ENCODE measurements at regions of chr13 and their contacts with region 1.

Region 1: GRCh38 chr13:95403828-95404522 is 102.7 kb upstream of the ABCC4 start:
- DNase-seq: peak; percentile 55
- H3K4me3 ChIP-seq: peak overlapping the region in 2 of 3 experiments; percentile 12 to 41
- H3K27ac ChIP-seq: no peak overlapping the region
- H3K4me1 ChIP-seq: peaks cover 4% of the 10 kb centered on the region
- H3K27me3 ChIP-seq: no peaks in the 10 kb centered on the region
- CTCF ChIP-seq: peak; percentile 90 to 93

Region 2: GRCh38 chr13:94620286-94620896 is 783.6 kb before region 1 on chr13:
- CTCF ChIA-PET with region 1: no interaction called
- dilution Hi-C with region 1: no loop called
- in situ Hi-C with region 1: no loop called
- intact Hi-C with region 1: loop called (anchors 1 kb)
- DNase-seq: peak; percentile 28
- H3K4me3 ChIP-seq: no peak overlapping the region
- H3K27ac ChIP-seq: no peak overlapping the region
- H3K4me1 ChIP-seq: no peaks in the 10 kb centered on the region
- H3K27me3 ChIP-seq: no peaks in the 10 kb centered on the region
- CTCF ChIP-seq: peak; percentile 83 to 89

Region 3: GRCh38 chr13:95191821-95192563 is 212.0 kb before region 1 on chr13:
- CTCF ChIA-PET with region 1: interaction called, 20 read pairs
- dilution Hi-C with region 1: no loop called
- in situ Hi-C with region 1: loop called in 1 of 2 experiments (anchors 5 kb)
- intact Hi-C with region 1: loop called (anchors 1 kb)
- DNase-seq: peak; percentile 31
- H3K4me3 ChIP-seq: no peak overlapping the region
- H3K27ac ChIP-seq: no peak overlapping the region
- H3K4me1 ChIP-seq: no peaks in the 10 kb centered on the region
- H3K27me3 ChIP-seq: no peaks in the 10 kb centered on the region
- CTCF ChIP-seq: peak; percentile 82 to 91

Region 4: GRCh38 chr13:95378603-95379002 is 25.4 kb before region 1 on chr13:
- CTCF ChIA-PET with region 1: interaction called, 5 read pairs
- dilution Hi-C with region 1: no loop called
- in situ Hi-C with region 1: no loop called
- intact Hi-C with region 1: loop called (anchors 1 kb)
- DNase-seq: no peak
- H3K4me3 ChIP-seq: no peak overlapping the region
- H3K27ac ChIP-seq: no peak overlapping the region
- H3K4me1 ChIP-seq: peaks cover 2% of the 10 kb centered on the region
- H3K27me3 ChIP-seq: no peaks in the 10 kb centered on the region
- CTCF ChIP-seq: no peak

Region 5: DNA sequence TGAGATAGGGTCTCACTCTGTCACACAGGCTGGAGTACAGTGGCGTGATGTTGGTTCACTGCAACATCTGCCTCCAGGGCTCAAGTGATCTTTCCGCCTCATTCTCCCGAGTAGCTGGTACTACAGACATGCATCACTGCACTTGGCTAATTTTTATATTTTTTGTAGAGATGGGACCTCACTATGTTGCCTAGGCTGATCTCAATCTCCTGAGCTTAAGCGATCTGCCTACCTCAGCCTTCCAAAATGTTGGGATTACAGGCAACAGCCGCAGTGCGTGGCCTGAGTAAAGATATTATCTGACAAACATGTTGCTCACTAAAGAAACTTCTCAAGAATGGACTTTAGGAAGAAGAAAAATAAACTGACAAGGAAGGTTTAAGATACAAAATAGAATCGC is 22.7 kb after region 1 on chr13:
- CTCF ChIA-PET with region 1: no interaction called
- dilution Hi-C with region 1: no loop called
- in situ Hi-C with region 1: no loop called
- intact Hi-C with region 1: no loop called
- DNase-seq: no peak
- H3K4me3 ChIP-seq: no peak overlapping the region
- H3K27ac ChIP-seq: no peak overlapping the region
- H3K4me1 ChIP-seq: no peaks in the 10 kb centered on the region
- H3K27me3 ChIP-seq: no peaks in the 10 kb centered on the region
- CTCF ChIP-seq: no peak

Region 6: DNA sequence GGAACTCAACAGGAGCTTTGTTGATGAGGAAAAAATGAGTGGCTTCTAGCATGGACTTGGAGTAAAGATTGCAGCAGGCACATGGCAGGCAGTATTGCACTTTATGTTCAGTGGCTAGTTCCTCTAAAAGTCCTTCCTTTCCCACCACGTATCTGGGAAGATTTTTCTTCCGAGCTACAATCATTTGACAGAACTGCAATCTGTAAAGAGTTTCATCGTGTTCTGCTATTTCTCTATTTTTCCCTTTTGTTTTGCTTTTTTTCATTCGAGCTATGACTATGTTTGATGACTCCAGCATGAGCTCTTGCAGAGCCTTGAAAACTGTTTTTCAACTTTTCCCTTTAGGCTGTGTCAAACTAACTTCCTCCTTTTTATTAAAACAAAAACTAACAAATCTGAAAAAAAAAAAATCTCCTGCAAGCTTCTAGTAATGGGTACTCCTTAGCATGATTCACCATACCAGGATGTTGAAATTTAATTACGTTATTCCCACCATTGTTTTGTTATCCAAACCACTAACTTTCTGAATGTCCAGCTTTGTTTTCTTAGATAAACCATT is 160.8 kb after region 1 on chr13:
- CTCF ChIA-PET with region 1: no interaction called
- dilution Hi-C with region 1: no loop called
- in situ Hi-C with region 1: no loop called
- intact Hi-C with region 1: loop called (anchors 5 kb)
- DNase-seq: peak; percentile 81
- H3K4me3 ChIP-seq: no peak overlapping the region
- H3K27ac ChIP-seq: no peak overlapping the region
- H3K4me1 ChIP-seq: peaks cover 7% of the 10 kb centered on the region
- H3K27me3 ChIP-seq: no peaks in the 10 kb centered on the region
- CTCF ChIP-seq: no peak

Measured in mammary epithelial cell (primary cell).